Activated naive CD4-positive, alpha-beta T cell treated with anti-CD3 and anti-CD28 coated beads for 36 hours (primary cell): ENCODE measurements at regions of chr13 and their contacts with region 1.

Region 1: GRCh38 chr13:37109051-37109678 is 3.7 kb upstream of the CSNK1A1L start:
- DNase-seq: no peak
- H3K4me3 Mint-ChIP-seq: no peak overlapping the region
- H3K27ac Mint-ChIP-seq: no peak overlapping the region
- H3K4me1 Mint-ChIP-seq: no peaks in the 10 kb centered on the region
- H3K27me3 Mint-ChIP-seq: peaks cover 7% of the 10 kb centered on the region

Region 2: DNA sequence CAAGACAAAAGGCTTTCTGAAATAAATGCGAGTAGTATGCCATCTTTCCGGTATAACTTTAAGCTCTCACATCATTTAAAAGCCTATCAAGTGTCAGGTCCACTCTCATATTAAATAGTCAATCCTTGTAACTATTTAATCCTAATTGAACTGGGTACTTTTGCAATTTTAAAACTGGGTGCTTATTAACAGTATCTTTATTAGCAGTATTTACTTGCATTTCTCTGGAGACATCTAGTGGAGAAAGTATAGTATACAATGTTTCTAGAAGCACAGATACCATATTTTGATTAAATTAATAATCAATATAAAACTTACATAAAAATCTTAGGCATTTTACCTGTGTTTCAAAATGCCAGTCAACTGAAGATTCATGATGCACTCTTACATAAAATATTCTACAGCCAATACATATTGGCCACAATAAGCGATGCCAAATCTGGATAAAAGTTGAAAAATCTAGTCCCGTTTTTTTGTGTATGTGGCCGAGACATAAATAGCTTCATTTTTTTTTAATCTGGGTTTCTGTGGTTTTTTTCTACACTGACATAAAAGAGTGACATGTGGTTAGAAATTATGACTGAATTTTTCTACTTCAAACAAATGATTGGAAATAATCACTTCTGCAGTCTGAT is 493.7 kb after region 1 on chr13:
- CTCF ChIA-PET with region 1: no interaction called
- intact Hi-C with region 1: loop called (anchors 2 kb)
- DNase-seq: no peak
- H3K4me3 Mint-ChIP-seq: no peak overlapping the region
- H3K27ac Mint-ChIP-seq: no peak overlapping the region
- H3K4me1 Mint-ChIP-seq: no peaks in the 10 kb centered on the region
- H3K27me3 Mint-ChIP-seq: no peaks in the 10 kb centered on the region

Region 3: GRCh38 chr13:38582133-38582532 is 1473.0 kb after region 1 on chr13:
- CTCF ChIA-PET with region 1: no interaction called
- intact Hi-C with region 1: loop called (anchors 10 kb)
- DNase-seq: peak; percentile 4
- H3K4me3 Mint-ChIP-seq: no peak overlapping the region
- H3K27ac Mint-ChIP-seq: no peak overlapping the region
- H3K4me1 Mint-ChIP-seq: no peaks in the 10 kb centered on the region
- H3K27me3 Mint-ChIP-seq: no peaks in the 10 kb centered on the region

Region 4: DNA sequence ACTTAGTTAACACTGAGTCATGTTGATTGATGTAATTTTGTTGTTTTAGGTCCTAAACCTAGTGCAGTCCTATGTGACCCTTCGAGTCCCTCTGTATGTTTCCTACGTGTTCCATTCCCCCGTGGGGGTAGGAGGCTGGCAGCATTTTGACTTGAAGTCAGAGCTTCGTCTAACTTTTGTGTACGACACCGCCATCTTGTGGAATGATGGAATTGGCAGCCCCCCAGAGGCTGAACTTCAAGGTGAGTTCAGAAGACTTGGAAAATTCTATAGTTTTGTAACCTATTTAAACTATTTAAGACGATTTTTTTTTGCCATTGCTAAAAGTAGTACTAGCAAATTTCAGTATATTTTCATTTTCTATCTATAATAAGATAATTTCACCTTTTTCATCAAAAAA is 1763.5 kb after region 1 on chr13:
- CTCF ChIA-PET with region 1: no interaction called
- intact Hi-C with region 1: loop called (anchors 2 kb)
- DNase-seq: peak; percentile 66
- H3K4me3 Mint-ChIP-seq: no peak overlapping the region
- H3K27ac Mint-ChIP-seq: no peak overlapping the region
- H3K4me1 Mint-ChIP-seq: no peaks in the 10 kb centered on the region
- H3K27me3 Mint-ChIP-seq: peaks cover 14% of the 10 kb centered on the region

Region 5: DNA sequence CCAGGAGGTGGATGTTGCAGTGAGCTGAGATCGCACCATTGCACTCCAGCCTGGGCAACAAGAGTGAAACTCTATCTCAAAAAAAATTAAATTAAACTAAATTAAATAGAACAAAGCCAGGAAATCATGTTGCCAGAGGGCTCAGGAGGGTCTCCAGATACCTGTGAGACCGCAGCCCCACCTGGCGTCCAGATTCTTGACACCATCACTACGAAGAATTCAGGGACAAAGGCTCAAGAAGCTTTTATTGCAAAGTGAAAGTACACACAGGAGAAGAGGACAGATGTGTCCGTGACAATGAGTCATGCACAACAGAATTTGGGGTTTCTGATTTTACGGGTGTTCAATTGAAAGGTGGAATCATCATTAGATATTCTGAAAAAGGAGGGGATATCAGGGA is 1804.9 kb after region 1 on chr13:
- CTCF ChIA-PET with region 1: no interaction called
- intact Hi-C with region 1: loop called (anchors 1 kb)
- DNase-seq: no peak
- H3K4me3 Mint-ChIP-seq: no peak overlapping the region
- H3K27ac Mint-ChIP-seq: no peak overlapping the region
- H3K4me1 Mint-ChIP-seq: no peaks in the 10 kb centered on the region
- H3K27me3 Mint-ChIP-seq: peaks cover 11% of the 10 kb centered on the region